ENCODE measurements at regions of chr20 and their contacts with region 1.

Region 1: DNA sequence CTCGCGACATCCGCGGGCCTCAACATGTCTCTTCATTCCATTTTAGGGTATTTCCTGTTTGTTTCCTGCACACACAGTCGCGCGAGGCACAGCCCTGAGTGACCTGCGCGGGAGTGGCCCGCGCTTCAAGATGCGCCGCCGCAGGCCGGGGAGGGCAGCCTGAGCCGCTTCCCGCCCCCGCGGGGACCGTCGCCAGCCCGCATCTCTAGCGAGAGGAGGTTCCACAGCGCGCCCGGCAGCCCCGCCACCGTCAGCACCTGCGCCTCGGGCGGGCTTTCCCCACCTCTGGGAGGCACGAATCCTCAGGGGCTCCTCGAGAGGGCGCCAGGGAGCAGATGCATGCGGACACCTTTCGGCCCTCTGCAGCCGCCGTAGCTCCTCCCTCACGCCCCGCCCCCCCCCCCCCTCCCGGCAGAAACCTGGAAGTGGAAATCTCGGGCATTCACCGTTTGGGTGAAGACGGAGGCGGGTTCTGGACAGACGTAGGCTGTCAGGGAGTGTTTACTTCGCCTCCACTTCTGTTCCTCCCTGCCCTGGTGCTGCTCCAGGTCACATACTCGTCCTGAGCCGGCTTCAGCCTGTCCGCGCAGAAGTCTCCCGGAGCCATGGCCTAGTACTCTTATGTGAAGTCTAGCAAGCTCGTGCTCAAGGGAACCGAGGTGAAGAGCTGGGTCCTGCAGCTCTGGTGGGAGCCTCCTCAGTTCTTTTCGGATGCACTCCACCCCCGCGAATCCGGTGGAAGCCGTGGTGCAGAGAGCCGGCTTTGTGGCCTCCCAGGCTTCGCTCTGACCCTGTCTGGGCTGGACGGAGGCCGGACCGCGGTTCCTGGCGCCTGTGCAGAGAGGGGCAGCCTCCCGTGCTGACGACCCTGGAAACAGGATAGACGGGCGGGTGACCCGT is 880.4 kb upstream of the DEFB115 start:
- DNase-seq: peak; percentile 68
- ATAC-seq: peak; percentile 96
- H3K4me3 ChIP-seq: peak overlapping the region; percentile 66 to 91
- H3K27ac ChIP-seq: peak overlapping the region; percentile 70
- H3K4me1 ChIP-seq: peaks cover 0 to 5% of the 10 kb centered on the region in 2 experiments; a peak in 1 of 4 replicates
- H3K27me3 ChIP-seq: no peaks in the 10 kb centered on the region
- CTCF ChIP-seq: peak; percentile 17 to 63 (median 52); a peak in 4 of 6 replicates
- POLR2A ChIP-seq: peak; percentile 72
- RAD21 ChIP-seq: no peak

Region 2: GRCh38 chr20:29741894-29742698 is 634.9 kb before region 1 on chr20:
- CTCF ChIA-PET with region 1: no interaction called
- POLR2A ChIA-PET with region 1: no interaction called
- RAD21 ChIA-PET with region 1: no interaction called
- intact Hi-C with region 1: no loop called
- DNase-seq: no peak
- ATAC-seq: no peak
- H3K4me3 ChIP-seq: no peak overlapping the region
- H3K27ac ChIP-seq: no peak overlapping the region
- H3K4me1 ChIP-seq: no peaks in the 10 kb centered on the region
- H3K27me3 ChIP-seq: no peaks in the 10 kb centered on the region
- CTCF ChIP-seq: no peak
- POLR2A ChIP-seq: no peak
- RAD21 ChIP-seq: no peak

Region 3: DNA sequence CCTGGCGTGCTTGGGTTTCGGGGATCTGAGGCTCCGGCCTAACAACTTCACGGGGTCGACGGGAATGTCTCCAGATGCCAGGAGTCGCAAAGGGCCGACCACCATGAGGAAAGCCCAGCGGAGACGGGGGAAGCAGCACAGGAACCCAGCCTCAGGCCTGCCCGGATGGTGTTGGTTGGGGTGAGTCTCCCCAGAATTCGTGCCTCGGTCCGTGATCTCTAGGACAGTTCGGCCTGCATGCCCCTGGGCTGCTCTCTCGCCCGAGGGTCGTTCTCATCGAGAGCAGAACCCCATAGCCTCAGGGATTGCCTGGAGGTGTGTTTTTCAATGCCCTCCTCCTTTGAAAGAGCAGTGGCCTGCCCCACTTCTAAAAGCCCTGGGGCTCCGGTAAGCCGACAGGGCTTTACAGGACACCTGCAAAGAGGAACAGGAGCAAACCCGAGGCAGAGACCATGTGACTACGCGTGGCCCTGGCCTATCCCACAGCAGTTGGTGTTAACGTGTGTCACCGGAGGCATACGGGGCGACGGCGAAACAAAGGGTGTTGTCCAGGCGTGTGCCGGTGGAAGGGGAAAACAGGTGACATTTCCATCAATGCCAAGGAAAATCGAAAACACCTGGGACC is 92.6 kb before region 1 on chr20:
- CTCF ChIA-PET with region 1: no interaction called
- POLR2A ChIA-PET with region 1: no interaction called
- RAD21 ChIA-PET with region 1: no interaction called
- intact Hi-C with region 1: no loop called
- DNase-seq: no peak
- ATAC-seq: peak; percentile 17; the same call in 1 of the 2 replicates
- H3K4me3 ChIP-seq: peak overlapping the region in 1 of 2 experiments; percentile 20; a peak in 2 of 4 replicates
- H3K27ac ChIP-seq: no peak overlapping the region
- H3K4me1 ChIP-seq: no peaks in the 10 kb centered on the region; a peak in 1 of 4 replicates
- H3K27me3 ChIP-seq: no peaks in the 10 kb centered on the region
- CTCF ChIP-seq: no peak
- POLR2A ChIP-seq: no peak
- RAD21 ChIP-seq: no peak

Region 4: DNA sequence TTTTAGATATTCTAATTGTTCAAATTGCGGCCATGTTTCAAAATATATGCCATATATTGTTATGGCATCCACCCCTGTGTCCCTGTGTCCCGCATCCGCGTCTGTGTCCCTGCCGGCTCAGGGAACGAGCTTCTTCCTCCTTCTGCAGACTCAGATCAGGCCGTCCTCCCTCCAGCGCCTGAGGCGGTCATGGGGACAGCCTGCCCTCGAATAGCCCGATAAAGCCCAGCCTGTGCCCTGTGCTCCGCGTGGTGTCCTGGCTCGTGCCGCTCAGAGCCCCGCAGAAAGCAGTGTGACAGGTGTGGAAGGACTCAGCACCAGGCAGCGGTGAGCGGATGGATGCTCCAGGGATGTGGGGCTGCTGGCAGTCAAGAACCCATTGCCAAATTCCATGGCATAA is 217.1 kb after region 1 on chr20:
- CTCF ChIA-PET with region 1: no interaction called
- POLR2A ChIA-PET with region 1: no interaction called
- RAD21 ChIA-PET with region 1: no interaction called
- intact Hi-C with region 1: loop called (anchors 10 kb)
- DNase-seq: no peak
- ATAC-seq: no peak
- H3K4me3 ChIP-seq: no peak overlapping the region
- H3K27ac ChIP-seq: no peak overlapping the region
- H3K4me1 ChIP-seq: no peaks in the 10 kb centered on the region
- H3K27me3 ChIP-seq: no peaks in the 10 kb centered on the region
- CTCF ChIP-seq: no peak
- POLR2A ChIP-seq: no peak
- RAD21 ChIP-seq: no peak